ENCODE measurements at regions of chr15 and their contacts with region 1.

Region 1: GRCh38 chr15:77419836-77420609 is at the start of gene PEAK1:
- DNase-seq: peak; percentile 100
- ATAC-seq: peak; percentile 96 to 99 (median 98)
- H3K4me3 ChIP-seq: peak within 1 kb of the TSS; percentile 73 to 97 (median 90)
- H3K27ac ChIP-seq: peak within 1 kb of the TSS; percentile 92 to 98 (median 96)
- H3K4me1 ChIP-seq: peaks cover 4 to 76% (median 66%) of the 10 kb centered on the region in 9 donors
- H3K27me3 ChIP-seq: no peaks in the 10 kb centered on the region
- CTCF ChIP-seq: no peak
- total RNA-seq, gene PEAK1: 68.1 to 146 (median 96.4) TPM

Region 2: GRCh38 chr15:77118882-77119321 is 301.1 kb before region 1 on chr15:
- intact Hi-C with region 1: loop called in 3 of 10 experiments (anchors 5 to 10 kb)
- DNase-seq: peak in 1 of 2 donors; percentile 60
- ATAC-seq: peak in 6 of 8 donors; percentile 71 to 82 (median 79)
- H3K4me3 ChIP-seq: no peak overlapping the region
- H3K27ac ChIP-seq: peak overlapping the region in 2 of 10 donors; percentile 3 to 38
- H3K4me1 ChIP-seq: peaks cover 0 to 40% (median 16%) of the 10 kb centered on the region in 9 donors
- H3K27me3 ChIP-seq: no peaks in the 10 kb centered on the region
- CTCF ChIP-seq: peak; percentile 59 to 89 (median 75)

Region 3: GRCh38 chr15:77186594-77187011 is 233.4 kb before region 1 on chr15:
- intact Hi-C with region 1: loop called in 5 of 10 experiments (anchors 2 to 10 kb)
- DNase-seq: no peak
- ATAC-seq: peak in 7 of 8 donors; percentile 33 to 64 (median 43)
- H3K4me3 ChIP-seq: no peak overlapping the region
- H3K27ac ChIP-seq: peak overlapping the region; percentile 38 to 93 (median 80)
- H3K4me1 ChIP-seq: peaks cover 5 to 70% (median 55%) of the 10 kb centered on the region in 9 donors
- H3K27me3 ChIP-seq: no peaks in the 10 kb centered on the region
- CTCF ChIP-seq: peak; percentile 38 to 81 (median 63)

Region 4: GRCh38 chr15:77224352-77224751 is 195.7 kb before region 1 on chr15:
- intact Hi-C with region 1: loop called in 1 of 10 experiments (anchors 10 kb)
- DNase-seq: no peak
- ATAC-seq: peak in 2 of 8 donors; percentile 48 to 55
- H3K4me3 ChIP-seq: no peak overlapping the region
- H3K27ac ChIP-seq: peak overlapping the region in 5 of 10 donors; percentile 7 to 60 (median 33)
- H3K4me1 ChIP-seq: peaks cover 0 to 50% (median 28%) of the 10 kb centered on the region in 9 donors
- H3K27me3 ChIP-seq: no peaks in the 10 kb centered on the region
- CTCF ChIP-seq: no peak

Region 5: DNA sequence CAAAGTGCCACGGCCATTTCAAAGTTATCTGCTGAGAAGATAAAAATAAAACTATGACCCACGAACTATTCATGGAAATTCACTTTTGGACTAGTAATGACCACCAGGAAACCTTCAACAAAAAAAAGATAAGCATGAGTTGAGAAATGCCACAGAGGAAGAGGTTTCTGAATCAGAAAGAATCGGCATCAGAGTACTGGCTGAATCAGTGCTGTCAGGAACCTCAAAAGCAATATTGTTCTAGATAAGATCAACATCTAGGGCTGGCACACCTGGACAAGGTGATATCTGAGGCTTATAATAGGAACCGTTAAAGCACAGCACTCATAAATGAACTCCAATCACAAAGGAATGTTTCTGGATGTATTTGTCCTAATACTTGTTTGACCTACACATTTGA is 72.8 kb before region 1 on chr15:
- intact Hi-C with region 1: loop called in 2 of 10 experiments (anchors 5 kb)
- DNase-seq: no peak
- ATAC-seq: peak in 3 of 8 donors; percentile 25 to 28 (median 27)
- H3K4me3 ChIP-seq: no peak overlapping the region
- H3K27ac ChIP-seq: peak overlapping the region in 5 of 10 donors; percentile 1 to 40 (median 6)
- H3K4me1 ChIP-seq: peaks cover 6 to 58% (median 40%) of the 10 kb centered on the region in 9 donors
- H3K27me3 ChIP-seq: no peaks in the 10 kb centered on the region
- CTCF ChIP-seq: no peak

Region 6: DNA sequence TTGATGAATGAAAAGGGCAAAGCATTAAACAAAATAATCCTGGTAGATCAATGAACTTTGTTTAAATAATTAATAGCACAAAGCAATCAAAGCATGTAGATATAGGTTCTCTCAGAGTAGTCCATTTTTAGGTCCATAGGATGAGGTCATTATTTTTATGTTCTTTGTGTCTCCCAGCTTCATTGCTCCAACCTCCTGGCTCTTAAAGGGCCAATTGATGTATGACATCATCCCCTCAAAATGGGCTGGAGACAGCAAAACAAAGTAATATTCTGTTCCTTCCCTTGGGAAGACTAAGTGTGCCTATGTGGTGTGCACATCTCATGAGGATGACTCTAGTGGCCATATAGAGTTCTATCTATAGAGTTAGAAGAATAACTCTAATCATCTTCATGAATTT is 50.2 kb after region 1 on chr15:
- intact Hi-C with region 1: no loop called
- DNase-seq: no peak
- ATAC-seq: no peak
- H3K4me3 ChIP-seq: no peak overlapping the region
- H3K27ac ChIP-seq: no peak overlapping the region
- H3K4me1 ChIP-seq: peaks cover 0 to 31% (median 17%) of the 10 kb centered on the region in 9 donors
- H3K27me3 ChIP-seq: no peaks in the 10 kb centered on the region
- CTCF ChIP-seq: no peak

Region 7: DNA sequence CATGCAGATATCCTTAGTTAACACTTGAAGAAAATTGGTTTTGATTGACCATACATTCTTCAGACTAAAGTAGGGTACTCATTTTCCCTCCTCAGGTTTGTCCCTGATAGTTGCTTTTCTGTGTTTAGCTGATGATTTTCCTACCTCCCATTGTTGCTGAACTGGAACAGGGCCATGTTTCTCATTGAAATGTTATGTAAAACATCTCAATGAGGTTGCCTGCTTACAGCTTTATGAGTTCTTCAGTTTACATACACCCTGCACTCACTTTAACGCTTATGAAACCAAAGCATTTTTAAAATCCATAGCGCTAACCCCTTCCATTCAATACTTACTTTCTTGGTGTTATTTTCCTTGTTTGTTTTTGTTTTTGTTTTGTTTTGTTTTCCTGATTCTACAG is 62.5 kb after region 1 on chr15:
- intact Hi-C with region 1: loop called in 1 of 10 experiments (anchors 5 kb)
- DNase-seq: no peak
- ATAC-seq: peak in 4 of 8 donors; percentile 50 to 63 (median 55)
- H3K4me3 ChIP-seq: no peak overlapping the region
- H3K27ac ChIP-seq: peak overlapping the region in 9 of 10 donors; percentile 20 to 85 (median 63)
- H3K4me1 ChIP-seq: peaks cover 9 to 73% (median 56%) of the 10 kb centered on the region in 9 donors
- H3K27me3 ChIP-seq: no peaks in the 10 kb centered on the region
- CTCF ChIP-seq: no peak

Region 8: GRCh38 chr15:77543159-77543882 is 123.3 kb after region 1 on chr15:
- intact Hi-C with region 1: loop called in 4 of 10 experiments (anchors 2 to 5 kb)
- DNase-seq: peak; percentile 90 to 91
- ATAC-seq: peak; percentile 88 to 93 (median 92)
- H3K4me3 ChIP-seq: peak overlapping the region in 9 of 10 donors; percentile 18 to 56 (median 49)
- H3K27ac ChIP-seq: peak overlapping the region in 9 of 10 donors; percentile 19 to 87 (median 77)
- H3K4me1 ChIP-seq: peaks cover 19 to 63% (median 47%) of the 10 kb centered on the region in 9 donors
- H3K27me3 ChIP-seq: no peaks in the 10 kb centered on the region
- CTCF ChIP-seq: peak; percentile 97 to 100 (median 98)

Measured in heart right ventricle (tissue), 16 donors.